ENCODE measurements at regions of chr6 and their contacts with region 1.

Region 1: DNA sequence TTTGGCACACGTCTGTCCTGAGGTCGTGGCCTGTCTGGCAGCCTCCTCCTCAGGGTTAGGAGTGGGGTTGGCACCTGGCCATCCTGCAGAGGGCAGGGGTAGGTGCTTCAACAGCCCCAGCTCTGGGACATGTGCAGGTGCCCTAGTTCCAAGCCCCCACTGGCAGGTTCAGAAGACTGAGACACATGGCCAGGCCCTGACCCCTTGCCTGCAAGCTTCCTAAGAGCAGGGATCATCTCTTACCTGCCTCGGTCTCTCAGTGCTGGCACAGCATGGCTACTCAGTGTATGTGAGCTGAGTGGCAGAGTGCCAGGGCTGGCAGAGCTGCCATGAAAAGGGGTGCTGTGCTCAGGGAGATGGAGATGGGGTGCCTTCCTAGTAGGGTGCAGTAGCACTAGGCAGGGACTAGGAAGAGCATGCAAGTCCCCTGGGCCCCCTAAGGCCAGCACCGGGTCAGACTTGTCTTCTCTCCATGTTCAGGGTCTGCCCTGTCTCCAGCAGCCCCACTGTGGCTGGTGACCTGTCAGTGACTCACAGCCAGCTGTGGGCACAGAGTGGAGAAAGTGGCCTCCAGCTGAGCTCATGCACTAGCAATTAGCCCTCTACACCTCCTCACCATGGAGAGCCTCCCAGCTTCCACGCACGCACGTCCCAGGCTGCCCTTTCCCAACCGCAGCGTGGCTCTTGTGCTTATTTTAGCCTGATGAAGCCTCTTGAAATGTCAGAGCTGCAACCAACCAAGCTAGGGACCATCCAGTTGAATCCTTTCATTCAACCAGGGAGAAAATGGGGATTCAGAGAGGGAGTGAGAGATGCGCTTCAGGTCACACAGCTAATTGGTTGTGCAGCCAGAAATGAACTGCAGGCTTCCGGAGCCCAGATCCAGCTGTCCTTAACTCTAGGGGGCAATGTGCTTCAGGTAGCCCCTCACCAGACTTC is 116.6 kb downstream of the MRPL14 start:
- DNase-seq: peak; percentile 90
- H3K4me3 ChIP-seq: no peak overlapping the region
- H3K27ac ChIP-seq: peak overlapping the region; percentile 82
- H3K4me1 ChIP-seq: peaks cover 32% of the 10 kb centered on the region
- H3K27me3 ChIP-seq: no peaks in the 10 kb centered on the region
- CTCF ChIP-seq: no peak

Region 2: DNA sequence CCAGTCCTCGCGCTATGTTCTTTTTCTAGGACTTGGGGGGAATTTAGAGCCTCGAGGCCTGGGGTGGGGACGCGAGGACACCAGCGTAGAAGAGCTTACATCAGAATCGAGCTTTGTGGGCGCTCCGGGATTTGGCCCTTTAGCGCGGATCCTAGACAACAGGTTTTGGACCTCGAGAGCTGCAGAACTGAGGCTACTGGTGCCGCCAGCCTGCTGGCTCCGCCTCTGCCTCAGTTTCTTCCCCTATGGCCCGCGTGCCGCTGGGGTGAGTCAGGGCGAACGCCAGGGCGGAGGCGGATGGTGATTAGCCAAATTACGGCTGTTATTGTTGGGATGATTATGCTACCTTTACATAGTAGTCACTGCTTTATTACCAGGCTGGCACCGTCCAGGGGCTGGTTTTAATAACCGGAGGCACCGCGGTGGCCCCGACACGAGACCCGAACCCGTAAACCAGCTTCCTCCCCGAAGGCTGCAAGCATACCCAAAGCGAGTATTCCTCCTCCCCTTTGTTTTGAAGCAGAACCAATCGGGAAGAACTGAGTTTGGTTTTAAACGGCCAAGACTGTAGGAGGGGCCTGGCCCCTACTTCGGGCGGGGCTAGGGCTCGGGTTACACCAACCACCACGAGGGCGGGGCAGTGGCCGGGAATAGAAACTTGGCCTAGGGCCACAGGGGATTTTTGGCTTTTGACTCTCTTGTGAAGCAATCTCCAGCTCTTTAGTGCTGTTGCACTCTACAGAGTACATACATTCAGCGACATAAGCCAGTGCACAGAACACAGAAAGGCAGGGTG is 381.0 kb before region 1 on chr6:
- CTCF ChIA-PET with region 1: no interaction called
- dilution Hi-C with region 1: no loop called
- in situ Hi-C with region 1: no loop called
- intact Hi-C with region 1: no loop called
- DNase-seq: peak; percentile 98
- H3K4me3 ChIP-seq: peak overlapping the region; percentile 78 to 85 (median 83)
- H3K27ac ChIP-seq: peak overlapping the region; percentile 92
- H3K4me1 ChIP-seq: peaks cover 22% of the 10 kb centered on the region
- H3K27me3 ChIP-seq: no peaks in the 10 kb centered on the region
- CTCF ChIP-seq: no peak

Region 3: GRCh38 chr6:43926634-43927524 is 83.8 kb before region 1 on chr6:
- CTCF ChIA-PET with region 1: no interaction called
- dilution Hi-C with region 1: no loop called
- in situ Hi-C with region 1: no loop called
- intact Hi-C with region 1: loop called (anchors 5 kb)
- DNase-seq: peak; percentile 93
- H3K4me3 ChIP-seq: no peak overlapping the region
- H3K27ac ChIP-seq: peak overlapping the region; percentile 69
- H3K4me1 ChIP-seq: peaks cover 45% of the 10 kb centered on the region
- H3K27me3 ChIP-seq: no peaks in the 10 kb centered on the region
- CTCF ChIP-seq: peak; percentile 8 to 54

Region 4: GRCh38 chr6:44041461-44042260 is 31.0 kb after region 1 on chr6:
- CTCF ChIA-PET with region 1: no interaction called
- dilution Hi-C with region 1: no loop called
- in situ Hi-C with region 1: no loop called
- intact Hi-C with region 1: loop called (anchors 1 kb)
- DNase-seq: peak; percentile 96
- H3K4me3 ChIP-seq: no peak overlapping the region
- H3K27ac ChIP-seq: peak overlapping the region; percentile 73
- H3K4me1 ChIP-seq: peaks cover 54% of the 10 kb centered on the region
- H3K27me3 ChIP-seq: no peaks in the 10 kb centered on the region
- CTCF ChIP-seq: no peak

Region 5: GRCh38 chr6:44064089-44064947 is 53.6 kb after region 1 on chr6:
- CTCF ChIA-PET with region 1: no interaction called
- dilution Hi-C with region 1: loop called (anchors 5 kb)
- in situ Hi-C with region 1: no loop called
- intact Hi-C with region 1: no loop called
- DNase-seq: peak; percentile 99
- H3K4me3 ChIP-seq: no peak overlapping the region
- H3K27ac ChIP-seq: peak overlapping the region; percentile 85
- H3K4me1 ChIP-seq: peaks cover 73% of the 10 kb centered on the region
- H3K27me3 ChIP-seq: no peaks in the 10 kb centered on the region
- CTCF ChIP-seq: no peak